ENCODE measurements at regions of chr10 and their contacts with region 1.

Region 1: DNA sequence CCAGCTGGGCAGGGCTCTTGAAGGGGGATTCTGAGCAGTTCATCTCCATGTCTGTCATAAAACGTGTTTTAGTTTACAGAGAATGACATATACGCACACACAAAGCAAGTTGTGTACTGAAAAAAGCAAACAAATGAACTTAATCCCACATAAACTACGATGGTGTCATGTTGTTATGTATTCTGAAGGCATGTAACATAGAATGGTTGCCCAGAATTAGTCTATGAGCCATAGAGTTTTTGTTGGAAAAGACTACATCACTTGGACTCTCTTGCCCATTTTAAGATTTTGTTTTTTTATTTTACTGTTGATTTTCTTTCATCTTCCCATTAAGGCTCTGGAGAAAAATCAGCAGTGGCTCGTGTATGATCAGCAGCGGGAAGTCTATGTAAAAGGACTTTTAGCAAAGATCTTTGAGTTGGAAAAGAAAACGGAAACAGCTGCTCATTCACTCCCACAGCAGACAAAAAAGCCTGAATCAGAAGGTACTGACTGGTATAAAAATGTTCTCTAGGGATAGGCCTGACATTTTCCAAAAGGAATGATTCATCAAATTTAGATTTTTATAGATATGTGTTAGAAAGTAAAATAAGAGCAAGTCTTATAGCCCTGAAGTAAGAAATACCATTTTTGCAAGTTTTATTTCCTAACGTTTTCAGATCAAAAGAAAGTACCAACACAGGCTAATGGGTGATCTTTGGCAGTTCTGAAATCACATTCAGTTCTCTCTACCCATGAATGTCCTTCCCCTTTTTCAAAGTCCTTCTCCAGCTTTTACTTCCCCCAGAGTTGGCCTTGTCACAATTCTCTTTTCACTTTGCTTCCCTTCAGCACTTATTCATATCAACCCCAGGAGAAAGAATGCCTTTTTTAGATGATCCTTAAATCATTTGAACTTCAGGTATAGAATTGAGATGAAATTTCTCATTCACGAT is 18.9 kb downstream of the CEP55 start:
- DNase-seq: peak; percentile 66
- H3K4me3 ChIP-seq: no peak overlapping the region
- H3K27ac ChIP-seq: no peak overlapping the region
- H3K4me1 ChIP-seq: peaks cover 4% of the 10 kb centered on the region
- H3K27me3 ChIP-seq: no peaks in the 10 kb centered on the region
- CTCF ChIP-seq: no peak
- POLR2A ChIP-seq: no peak

Region 2: GRCh38 chr10:92965314-92965713 is 550.0 kb before region 1 on chr10:
- CTCF ChIA-PET with region 1: interaction called, 12 read pairs
- POLR2A ChIA-PET with region 1: no interaction called
- dilution Hi-C with region 1: no loop called
- intact Hi-C with region 1: no loop called
- DNase-seq: peak; percentile 70
- H3K4me3 ChIP-seq: no peak overlapping the region
- H3K27ac ChIP-seq: peak overlapping the region; percentile 10
- H3K4me1 ChIP-seq: peaks cover 14% of the 10 kb centered on the region
- H3K27me3 ChIP-seq: no peaks in the 10 kb centered on the region
- CTCF ChIP-seq: peak; percentile 15 to 40
- POLR2A ChIP-seq: no peak

Region 3: GRCh38 chr10:93115661-93116383 is 399.5 kb before region 1 on chr10:
- CTCF ChIA-PET with region 1: interaction called, 23 read pairs
- POLR2A ChIA-PET with region 1: no interaction called
- dilution Hi-C with region 1: no loop called
- intact Hi-C with region 1: loop called (anchors 2 kb)
- DNase-seq: peak; percentile 38
- H3K4me3 ChIP-seq: no peak overlapping the region
- H3K27ac ChIP-seq: no peak overlapping the region
- H3K4me1 ChIP-seq: no peaks in the 10 kb centered on the region
- H3K27me3 ChIP-seq: peaks cover 8 to 13% of the 10 kb centered on the region in 2 experiments
- CTCF ChIP-seq: peak; percentile 21 to 60
- POLR2A ChIP-seq: no peak

Region 4: DNA sequence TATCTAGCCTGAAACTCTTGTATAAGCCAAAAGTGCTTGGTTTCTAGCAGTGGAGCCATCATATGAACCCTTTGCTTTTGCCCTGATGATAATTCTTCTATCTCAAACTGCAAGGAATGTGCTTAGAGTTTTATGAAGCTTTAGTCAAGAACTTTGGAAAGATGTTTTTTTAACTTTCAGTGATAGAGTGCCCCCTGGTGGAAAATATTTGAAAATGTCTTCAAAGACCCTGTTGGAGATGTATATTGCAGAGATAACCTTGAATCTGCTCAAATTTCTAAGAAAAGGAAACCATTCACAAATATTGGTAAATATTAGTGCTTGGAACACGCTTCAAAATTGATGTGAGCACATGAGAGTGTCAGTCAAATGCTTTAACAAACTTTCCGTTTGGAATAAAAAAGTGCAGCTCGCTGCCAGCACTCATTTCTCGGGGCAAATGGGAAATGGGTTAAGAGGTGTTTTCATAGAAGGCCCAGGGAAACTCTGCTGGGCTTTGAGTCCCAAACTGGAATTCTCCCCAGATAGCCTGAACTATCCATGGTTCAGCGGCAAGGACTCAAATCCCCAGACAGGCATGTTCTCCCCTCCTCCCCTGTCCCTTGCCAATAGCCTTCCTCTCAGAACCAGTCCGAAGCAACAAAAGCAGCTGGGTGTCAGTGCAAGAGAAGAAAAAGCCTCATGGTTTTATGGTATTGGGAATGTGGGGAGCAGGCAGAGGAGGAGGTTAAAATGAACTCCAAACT is 162.5 kb before region 1 on chr10:
- CTCF ChIA-PET with region 1: interaction called, 20 read pairs
- POLR2A ChIA-PET with region 1: no interaction called
- dilution Hi-C with region 1: no loop called
- intact Hi-C with region 1: loop called (anchors 1 kb)
- DNase-seq: peak; percentile 46
- H3K4me3 ChIP-seq: no peak overlapping the region
- H3K27ac ChIP-seq: no peak overlapping the region
- H3K4me1 ChIP-seq: peaks cover 2% of the 10 kb centered on the region
- H3K27me3 ChIP-seq: no peaks in the 10 kb centered on the region
- CTCF ChIP-seq: peak; percentile 36 to 46
- POLR2A ChIP-seq: no peak

Region 5: GRCh38 chr10:93680412-93681047 is 165.2 kb after region 1 on chr10:
- CTCF ChIA-PET with region 1: interaction called, 15 read pairs
- POLR2A ChIA-PET with region 1: no interaction called
- dilution Hi-C with region 1: no loop called
- intact Hi-C with region 1: no loop called
- DNase-seq: peak; percentile 77
- H3K4me3 ChIP-seq: no peak overlapping the region
- H3K27ac ChIP-seq: no peak overlapping the region
- H3K4me1 ChIP-seq: no peaks in the 10 kb centered on the region
- H3K27me3 ChIP-seq: no peaks in the 10 kb centered on the region
- CTCF ChIP-seq: peak; percentile 12 to 17
- POLR2A ChIP-seq: no peak